ENCODE measurements at regions of chrX and their contacts with region 1.

Region 1: GRCh38 chrX:49878834-49879659 is at the start of gene USP27X:
- DNase-seq: peak; percentile 87
- ATAC-seq: peak; percentile 95
- total RNA-seq, gene USP27X: 1.8 TPM

Region 2: DNA sequence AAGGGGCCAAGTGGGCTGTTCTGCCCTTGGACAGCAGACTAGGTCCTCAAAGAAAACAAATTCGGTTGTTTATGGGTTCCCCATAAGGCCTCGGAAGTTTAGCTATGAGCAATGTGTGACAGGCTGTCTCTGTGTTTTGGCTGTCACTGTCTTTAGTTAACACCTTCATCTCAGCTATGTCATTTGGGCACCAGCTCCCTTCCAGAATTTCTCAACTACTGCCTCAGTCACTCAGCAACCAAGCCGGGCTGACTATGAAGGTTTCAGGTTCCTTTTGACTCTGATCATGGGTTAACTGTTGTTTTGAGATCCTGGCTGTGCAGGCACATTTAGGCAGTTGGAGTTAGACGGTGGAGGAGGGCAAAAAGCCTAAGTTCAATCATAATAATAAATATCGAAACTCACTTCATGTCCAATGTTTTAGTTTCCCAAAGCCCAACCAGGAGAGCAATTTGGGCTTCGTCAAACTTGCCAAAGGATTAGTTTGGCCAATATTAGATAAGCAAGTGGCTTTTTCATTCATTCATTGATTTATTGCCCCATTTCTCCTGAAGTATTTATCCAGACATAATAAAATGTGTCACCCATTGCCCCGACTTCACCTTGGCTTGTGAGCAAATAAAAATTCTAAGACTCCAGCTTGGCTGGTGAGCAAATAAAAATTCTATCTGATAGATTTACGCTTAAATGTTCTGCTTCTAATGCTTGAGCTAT is 174.2 kb before region 1 on chrX:
- intact Hi-C with region 1: no loop called
- DNase-seq: no peak
- ATAC-seq: no peak

Region 3: DNA sequence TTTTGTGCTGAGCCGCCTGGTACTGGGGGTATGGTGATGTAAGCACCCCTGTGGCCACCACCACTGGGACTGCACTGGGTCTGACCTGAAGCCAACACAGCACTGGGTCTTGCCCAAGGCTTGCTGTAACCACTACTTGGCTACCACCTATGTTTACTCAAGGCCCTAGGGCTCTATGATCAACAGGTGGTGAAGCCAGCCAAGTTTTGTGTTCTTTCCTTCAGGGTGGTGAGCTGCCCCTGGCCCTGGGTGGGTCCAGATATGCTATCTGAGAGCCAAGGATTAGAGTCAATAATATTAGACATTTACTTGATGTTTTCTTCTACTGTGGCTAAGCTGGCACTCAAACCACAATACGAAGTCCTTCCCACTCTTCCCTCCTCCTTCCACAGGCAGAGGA is 105.1 kb before region 1 on chrX:
- intact Hi-C with region 1: no loop called
- DNase-seq: no peak
- ATAC-seq: no peak

Region 4: DNA sequence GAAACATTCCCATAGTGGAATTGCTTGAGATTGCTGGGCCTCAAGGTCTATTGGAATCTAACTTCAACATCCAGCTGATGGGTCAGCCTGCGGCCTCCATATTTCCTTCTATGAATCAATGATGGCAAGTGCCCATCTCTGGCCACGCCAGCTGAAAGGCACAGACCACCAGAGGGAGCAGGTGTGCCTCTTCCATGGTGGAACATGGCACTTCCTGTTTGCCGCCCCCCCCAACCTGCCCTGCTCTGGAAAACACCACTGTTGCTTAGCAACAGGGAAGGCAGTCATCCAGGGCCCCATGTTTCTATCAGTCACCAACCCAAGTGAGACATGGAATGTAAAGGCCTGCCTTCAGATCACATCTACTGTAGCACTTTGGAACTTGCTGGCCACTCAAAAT is 38.4 kb before region 1 on chrX:
- intact Hi-C with region 1: loop called (anchors 5 kb)
- DNase-seq: peak; percentile 60
- ATAC-seq: peak; percentile 34

Region 5: DNA sequence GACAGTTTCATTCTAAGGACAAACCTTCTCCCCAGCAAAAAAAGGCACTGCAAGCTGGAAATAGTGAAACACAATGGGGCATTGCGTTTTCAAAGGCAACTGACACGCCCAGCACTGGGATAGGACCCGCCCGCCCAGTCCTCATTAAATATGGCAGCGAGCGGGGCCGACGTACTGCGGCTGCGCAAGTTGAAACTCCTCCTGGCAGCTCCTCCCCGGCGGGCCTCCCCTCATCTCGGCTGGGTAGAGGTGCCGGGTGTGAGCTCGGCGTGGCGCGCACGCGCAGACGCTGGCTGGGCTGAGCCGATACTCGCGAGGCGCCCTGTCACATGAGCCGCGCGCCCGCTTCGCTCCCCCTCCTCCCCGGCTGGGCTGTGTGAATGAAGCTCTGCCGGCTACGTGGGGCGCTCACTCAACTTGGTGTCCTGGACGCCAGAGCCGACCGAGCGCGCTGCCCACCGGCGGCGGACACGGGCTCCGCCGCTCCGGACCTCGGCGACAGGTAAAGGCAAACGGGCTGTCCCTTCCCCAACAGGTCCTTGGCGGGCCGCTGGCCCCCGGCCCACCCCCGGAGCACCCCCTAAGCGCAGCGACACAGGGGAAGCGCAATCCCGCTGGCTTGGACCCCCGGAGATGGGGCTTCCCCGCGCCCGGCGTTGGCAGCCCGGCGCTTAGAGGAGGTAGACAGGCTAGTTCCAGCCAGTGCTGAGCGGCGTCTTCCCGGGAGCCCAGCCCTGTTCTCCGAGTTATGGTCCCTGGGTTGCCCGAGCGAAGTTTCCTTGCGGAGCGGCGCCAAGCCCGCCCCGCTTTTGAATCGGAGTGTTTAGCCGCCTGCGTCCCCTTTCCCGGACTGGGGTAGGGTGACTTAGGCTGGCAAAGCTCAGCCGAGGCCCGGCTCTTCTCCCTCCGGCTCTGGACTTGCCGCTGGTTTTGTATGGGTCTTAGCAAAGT is 43.5 kb after region 1 on chrX and contains the start of gene CLCN5:
- intact Hi-C with region 1: loop called (anchors 5 kb)
- DNase-seq: peak; percentile 98
- ATAC-seq: peak; percentile 99
- total RNA-seq, gene CLCN5: 2.7 TPM

Measured in Right ventricle myocardium inferior (tissue), 1 donor.